ENCODE measurements at regions of chr21 and their contacts with region 1.

Region 1: GRCh38 chr21:41121785-41122421 is 46.1 kb upstream of the BACE2 start:
- DNase-seq: peak; percentile 73
- ATAC-seq: peak; percentile 98
- H3K4me3 ChIP-seq: no peak overlapping the region
- H3K27ac ChIP-seq: no peak overlapping the region
- H3K4me1 ChIP-seq: peaks cover 0 to 3% of the 10 kb centered on the region in 2 experiments; a peak in 1 of 4 replicates
- H3K27me3 ChIP-seq: peaks cover 19% of the 10 kb centered on the region; the same call in 1 of the 2 replicates
- CTCF ChIP-seq: peak; percentile 40 to 98 (median 96); a peak in 5 of 6 replicates
- POLR2A ChIP-seq: no peak
- RAD21 ChIP-seq: peak; percentile 75

Region 2: GRCh38 chr21:41024753-41025254 is 97.1 kb before region 1 on chr21:
- CTCF ChIA-PET with region 1: no interaction called
- POLR2A ChIA-PET with region 1: no interaction called
- RAD21 ChIA-PET with region 1: no interaction called
- intact Hi-C with region 1: no loop called
- DNase-seq: no peak
- ATAC-seq: no peak
- H3K4me3 ChIP-seq: no peak overlapping the region
- H3K27ac ChIP-seq: no peak overlapping the region
- H3K4me1 ChIP-seq: no peaks in the 10 kb centered on the region
- H3K27me3 ChIP-seq: no peaks in the 10 kb centered on the region
- CTCF ChIP-seq: no peak
- POLR2A ChIP-seq: no peak
- RAD21 ChIP-seq: no peak

Region 3: GRCh38 chr21:41133896-41134522 is 12.1 kb after region 1 on chr21:
- CTCF ChIA-PET with region 1: interaction called, 33 read pairs
- POLR2A ChIA-PET with region 1: no interaction called
- RAD21 ChIA-PET with region 1: no interaction called
- intact Hi-C with region 1: no loop called
- DNase-seq: peak; percentile 39
- ATAC-seq: peak; percentile 78
- H3K4me3 ChIP-seq: no peak overlapping the region
- H3K27ac ChIP-seq: no peak overlapping the region
- H3K4me1 ChIP-seq: no peaks in the 10 kb centered on the region
- H3K27me3 ChIP-seq: peaks cover 22% of the 10 kb centered on the region
- CTCF ChIP-seq: peak; percentile 23 to 59 (median 58); a peak in 5 of 6 replicates
- POLR2A ChIP-seq: no peak
- RAD21 ChIP-seq: peak; percentile 45

Region 4: GRCh38 chr21:41460578-41461527 is 338.9 kb after region 1 on chr21:
- CTCF ChIA-PET with region 1: interaction called, 6 read pairs
- POLR2A ChIA-PET with region 1: no interaction called
- RAD21 ChIA-PET with region 1: no interaction called
- intact Hi-C with region 1: loop called (anchors 2 kb)
- DNase-seq: peak; percentile 27
- ATAC-seq: peak; percentile 97
- H3K4me3 ChIP-seq: no peak overlapping the region
- H3K27ac ChIP-seq: no peak overlapping the region
- H3K4me1 ChIP-seq: no peaks in the 10 kb centered on the region
- H3K27me3 ChIP-seq: no peaks in the 10 kb centered on the region
- CTCF ChIP-seq: peak; percentile 44 to 84 (median 75); a peak in 5 of 6 replicates
- POLR2A ChIP-seq: no peak
- RAD21 ChIP-seq: peak; percentile 59

Measured in HCT116 (cell line).